Activated CD4-positive, alpha-beta T cell treated with anti-CD3 and anti-CD28 coated beads for 36 hours (primary cell): ENCODE measurements at regions of chr19 and their contacts with region 1.

Region 1: GRCh38 chr19:1490311-1491113 is at the start of gene PCSK4:
- DNase-seq: peak; percentile 99
- ATAC-seq: peak; percentile 92
- H3K4me3 Mint-ChIP-seq: peak within 1 kb of the TSS; percentile 72
- H3K27ac Mint-ChIP-seq: peak within 1 kb of the TSS; percentile 66
- H3K4me1 Mint-ChIP-seq: peaks cover 9% of the 10 kb centered on the region
- H3K27me3 Mint-ChIP-seq: peaks cover 3% of the 10 kb centered on the region
- total RNA-seq, gene PCSK4: 1.8 to 3.9 TPM

Region 2: DNA sequence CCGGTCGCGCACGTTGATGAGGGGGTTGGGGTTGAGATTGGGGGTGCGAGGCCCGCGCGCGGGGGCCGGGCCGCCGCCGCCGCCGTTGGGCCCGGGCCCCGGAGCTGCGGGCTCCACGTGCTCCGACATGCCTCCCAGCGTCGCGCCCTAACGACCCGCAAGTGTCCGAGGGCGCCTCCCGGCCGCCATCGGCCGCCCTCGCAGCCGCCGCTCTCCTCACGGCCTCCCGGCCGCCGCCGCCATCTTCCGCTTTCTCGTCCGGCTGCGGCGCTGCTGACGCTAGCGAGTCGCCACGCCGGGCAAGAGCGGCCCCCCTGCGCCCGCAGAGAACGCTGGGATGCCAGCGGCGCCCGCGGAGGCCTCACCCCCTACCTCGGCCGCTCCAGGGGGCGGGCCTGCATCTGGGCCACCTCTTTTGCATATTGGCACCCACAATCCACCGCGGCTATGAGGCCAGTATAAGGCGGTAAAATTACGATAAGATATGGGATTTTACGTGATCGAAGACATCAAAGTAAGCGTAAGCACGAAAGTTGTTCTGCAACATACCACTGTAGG is 469.6 kb before region 1 on chr19 and contains the start of gene TMEM259:
- CTCF ChIA-PET with region 1: no interaction called
- POLR2A ChIA-PET with region 1: no interaction called
- intact Hi-C with region 1: loop called in 1 of 2 experiments (anchors 1 kb)
- DNase-seq: peak; percentile 99
- ATAC-seq: peak; percentile 90
- H3K4me3 Mint-ChIP-seq: peak within 1 kb of the TSS; percentile 94
- H3K27ac Mint-ChIP-seq: peak within 1 kb of the TSS; percentile 96
- H3K4me1 Mint-ChIP-seq: peaks cover 35% of the 10 kb centered on the region
- H3K27me3 Mint-ChIP-seq: no peaks in the 10 kb centered on the region
- total RNA-seq, gene TMEM259: 106 to 128 TPM

Region 3: DNA sequence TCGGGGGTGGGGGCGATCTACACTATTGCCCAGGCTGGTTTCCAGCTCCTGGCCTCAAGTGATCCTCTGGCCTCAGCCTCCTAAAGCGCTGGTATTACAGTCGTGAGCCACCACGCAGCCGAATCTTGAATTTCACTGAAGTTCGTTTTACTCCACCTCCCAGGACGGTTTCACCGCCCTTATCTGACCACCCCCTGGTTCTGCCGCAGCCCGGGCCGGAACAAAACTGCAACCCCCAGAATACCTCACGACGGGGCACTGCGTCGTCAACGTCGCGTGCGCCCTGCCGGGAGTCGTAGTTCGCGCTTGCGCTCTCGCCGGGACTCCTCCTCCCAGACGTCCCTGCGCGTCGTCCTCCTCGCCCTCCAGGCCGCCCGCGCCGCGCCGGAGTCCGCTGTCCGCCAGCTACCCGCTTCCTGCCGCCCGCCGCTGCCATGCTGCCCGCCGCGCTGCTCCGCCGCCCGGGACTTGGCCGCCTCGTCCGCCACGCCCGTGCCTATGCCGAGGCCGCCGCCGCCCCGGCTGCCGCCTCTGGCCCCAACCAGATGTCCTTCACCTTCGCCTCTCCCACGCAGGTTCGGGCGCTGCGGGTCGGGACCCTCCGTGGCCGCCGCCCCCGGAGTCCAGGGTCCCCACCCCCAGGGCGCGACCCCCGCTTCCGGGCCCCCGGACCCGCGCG is 249.0 kb before region 1 on chr19 and contains the start of gene ATP5F1D:
- CTCF ChIA-PET with region 1: no interaction called
- POLR2A ChIA-PET with region 1: no interaction called
- intact Hi-C with region 1: no loop called
- DNase-seq: peak; percentile 96
- ATAC-seq: peak; percentile 79
- H3K4me3 Mint-ChIP-seq: peak within 1 kb of the TSS; percentile 83
- H3K27ac Mint-ChIP-seq: peak within 1 kb of the TSS; percentile 86
- H3K4me1 Mint-ChIP-seq: peaks cover 38% of the 10 kb centered on the region
- H3K27me3 Mint-ChIP-seq: peaks cover 6% of the 10 kb centered on the region
- total RNA-seq, gene ATP5F1D: 161 to 180 TPM

Region 4: DNA sequence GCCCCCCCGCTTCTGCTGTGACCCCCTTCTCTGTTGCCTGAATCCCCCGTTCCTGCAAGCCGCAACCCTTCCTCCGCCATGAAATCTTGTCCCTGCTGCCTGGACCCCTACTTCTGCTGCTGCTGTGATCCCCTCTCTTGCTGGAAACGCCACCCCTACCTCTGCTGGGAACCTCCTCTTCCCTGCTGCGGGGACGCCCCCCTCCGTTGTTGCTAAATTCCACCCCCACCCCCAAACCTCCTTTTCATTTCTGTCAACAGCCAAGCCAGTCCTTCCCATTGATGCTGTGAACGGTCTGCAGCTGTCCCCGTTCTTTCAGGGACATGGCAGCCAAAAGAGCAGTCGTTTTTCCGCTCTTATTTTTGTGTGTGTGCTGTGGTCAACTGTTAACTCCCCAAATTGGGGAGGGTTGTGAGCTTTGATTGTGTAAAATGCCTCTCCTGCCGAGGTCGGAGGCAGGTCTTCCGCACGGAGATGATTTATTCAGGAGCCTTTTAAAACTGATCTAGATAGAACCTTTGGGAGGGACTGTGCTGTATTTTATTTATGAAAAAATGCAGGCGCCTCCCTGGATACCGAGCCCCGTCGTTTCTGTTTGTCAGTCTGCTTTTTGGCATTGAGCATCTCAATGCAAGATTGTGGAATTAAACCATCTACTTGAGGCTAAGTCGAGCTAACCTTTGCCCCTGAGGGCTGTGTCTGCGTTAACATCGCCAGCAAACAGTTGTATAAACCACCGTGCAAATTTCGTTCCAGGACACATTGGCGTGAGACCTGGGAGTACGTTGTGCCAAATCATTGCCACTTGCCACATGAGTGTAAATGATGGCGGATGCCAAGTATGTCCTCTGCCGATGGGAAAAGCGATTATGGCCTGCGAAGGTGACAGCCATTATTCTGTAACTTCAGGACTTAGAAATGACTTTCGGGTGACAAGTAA is 134.7 kb before region 1 on chr19:
- CTCF ChIA-PET with region 1: no interaction called
- POLR2A ChIA-PET with region 1: no interaction called
- intact Hi-C with region 1: loop called in 1 of 2 experiments (anchors 1 kb)
- DNase-seq: peak; percentile 51
- ATAC-seq: no peak
- H3K4me3 Mint-ChIP-seq: peak overlapping the region; percentile 77
- H3K27ac Mint-ChIP-seq: peak overlapping the region; percentile 49
- H3K4me1 Mint-ChIP-seq: peaks cover 9% of the 10 kb centered on the region
- H3K27me3 Mint-ChIP-seq: no peaks in the 10 kb centered on the region

Region 5: GRCh38 chr19:1478934-1479707 is 11.4 kb before region 1 on chr19 and contains the start of gene C19orf25:
- CTCF ChIA-PET with region 1: interaction called, 4 read pairs
- POLR2A ChIA-PET with region 1: interaction called, 3 read pairs
- intact Hi-C with region 1: loop called (anchors 1 kb)
- DNase-seq: peak; percentile 97
- ATAC-seq: peak; percentile 98
- H3K4me3 Mint-ChIP-seq: peak within 1 kb of the TSS; percentile 96
- H3K27ac Mint-ChIP-seq: peak within 1 kb of the TSS; percentile 95
- H3K4me1 Mint-ChIP-seq: peaks cover 6% of the 10 kb centered on the region
- H3K27me3 Mint-ChIP-seq: no peaks in the 10 kb centered on the region
- total RNA-seq, gene C19orf25: 19.9 to 26.9 TPM

Region 6: GRCh38 chr19:1592755-1593500 is 102.4 kb after region 1 on chr19 and contains the start of gene MBD3:
- CTCF ChIA-PET with region 1: no interaction called
- POLR2A ChIA-PET with region 1: no interaction called
- intact Hi-C with region 1: loop called in 1 of 2 experiments (anchors 1 kb)
- DNase-seq: peak; percentile 93
- ATAC-seq: peak; percentile 85
- H3K4me3 Mint-ChIP-seq: peak within 1 kb of the TSS; percentile 94
- H3K27ac Mint-ChIP-seq: peak within 1 kb of the TSS; percentile 93
- H3K4me1 Mint-ChIP-seq: peaks cover 20% of the 10 kb centered on the region
- H3K27me3 Mint-ChIP-seq: no peaks in the 10 kb centered on the region
- total RNA-seq, gene MBD3: 68.9 to 87.5 TPM

Region 7: DNA sequence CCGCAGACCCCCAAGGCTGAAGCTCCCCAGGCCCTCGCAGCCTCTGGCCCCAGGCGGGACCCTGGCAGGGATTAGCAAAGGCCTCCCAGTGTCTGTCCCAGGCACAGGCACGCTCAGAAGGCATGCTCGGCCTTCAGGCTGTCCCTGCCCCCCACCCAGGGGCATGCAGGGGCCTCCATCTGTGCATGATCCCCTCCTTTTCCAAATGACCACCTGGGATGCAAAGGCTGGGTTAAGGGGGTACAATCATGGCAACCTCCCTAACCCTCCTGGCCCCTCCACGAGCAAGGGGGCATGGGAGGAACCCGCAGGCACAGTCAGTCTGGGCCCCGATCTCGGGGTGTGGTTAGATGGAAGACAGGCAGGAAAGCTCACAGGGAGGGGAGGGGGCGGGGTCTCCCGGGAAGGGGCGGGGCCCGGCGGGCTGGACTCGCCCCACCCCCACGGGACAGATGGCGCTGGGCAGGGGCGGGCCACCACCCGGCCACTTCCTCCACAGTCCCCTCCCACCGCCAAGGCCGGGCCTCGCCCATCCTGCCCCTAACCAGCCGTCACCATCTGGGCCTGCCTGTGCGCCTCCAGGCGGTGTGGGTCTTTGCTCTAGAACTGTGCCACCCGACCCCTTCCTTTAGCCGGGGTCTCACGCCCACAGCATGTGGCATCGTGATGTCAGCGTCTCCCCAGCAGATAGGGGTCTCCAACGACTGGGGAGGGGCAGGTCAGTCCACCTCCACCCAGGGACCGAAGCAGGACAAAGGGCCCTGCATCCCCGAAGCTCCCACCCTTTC is 364.7 kb after region 1 on chr19:
- CTCF ChIA-PET with region 1: no interaction called
- POLR2A ChIA-PET with region 1: no interaction called
- intact Hi-C with region 1: loop called in 1 of 2 experiments (anchors 2 kb)
- DNase-seq: peak; percentile 95
- ATAC-seq: peak; percentile 82
- H3K4me3 Mint-ChIP-seq: peak overlapping the region; percentile 78
- H3K27ac Mint-ChIP-seq: peak overlapping the region; percentile 86
- H3K4me1 Mint-ChIP-seq: peaks cover 64% of the 10 kb centered on the region
- H3K27me3 Mint-ChIP-seq: no peaks in the 10 kb centered on the region